ENCODE measurements at regions of chr3 and their contacts with region 1.

Region 1: GRCh38 chr3:12663936-12664908 is at the start of gene RAF1:
- DNase-seq: peak; percentile 98
- ATAC-seq: peak; percentile 93 to 98 (median 95)
- H3K4me3 ChIP-seq: peak within 1 kb of the TSS; percentile 73 to 95 (median 92)
- H3K27ac ChIP-seq: peak within 1 kb of the TSS; percentile 96 to 100 (median 99)
- H3K4me1 ChIP-seq: peaks cover 4 to 41% (median 34%) of the 10 kb centered on the region in 9 donors
- H3K27me3 ChIP-seq: no peaks in the 10 kb centered on the region
- CTCF ChIP-seq: no peak
- total RNA-seq, gene RAF1: 98.1 to 193 (median 129) TPM

Region 2: DNA sequence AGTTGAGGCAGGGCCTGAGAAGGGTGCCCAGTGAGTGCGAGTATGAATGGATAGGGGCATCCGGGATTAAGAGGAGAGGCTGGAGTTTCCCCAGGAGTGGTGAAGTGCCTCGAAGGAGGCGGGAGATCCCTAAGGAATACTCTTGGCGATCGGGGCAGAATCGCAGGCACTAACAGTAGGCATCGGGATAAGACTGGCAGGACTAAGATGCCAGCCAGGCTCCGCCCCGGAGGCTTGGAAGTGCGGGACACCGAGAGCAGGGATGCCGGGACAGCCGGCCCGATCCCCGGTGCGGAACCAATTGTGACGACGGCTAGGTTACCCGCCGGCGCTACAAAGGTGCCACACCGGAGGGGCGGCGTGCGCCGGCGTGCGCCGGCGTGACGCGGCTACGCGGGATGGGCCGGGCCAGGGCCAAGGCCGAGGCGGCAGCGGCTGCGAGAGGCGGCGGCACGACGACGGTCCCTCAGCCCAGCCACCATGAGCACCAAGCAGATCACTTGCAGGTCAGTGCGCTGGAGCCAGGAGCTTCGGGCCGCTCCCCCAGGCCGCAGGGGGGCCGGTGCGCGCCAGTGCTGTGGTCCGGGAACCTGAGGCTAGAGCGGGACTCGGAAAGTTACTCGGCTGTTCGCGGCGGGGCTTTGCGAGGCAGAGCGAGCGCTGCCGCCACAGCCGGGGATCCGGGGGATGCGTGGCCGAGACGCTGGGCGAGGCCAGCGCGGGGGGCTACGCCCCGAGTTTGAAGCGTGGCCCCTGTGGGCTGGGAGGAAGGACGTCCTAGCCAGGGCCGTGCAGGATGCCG is 107.3 kb before region 1 on chr3 and contains the start of gene MKRN2:
- intact Hi-C with region 1: loop called in 5 of 10 experiments (anchors 2 to 5 kb)
- DNase-seq: peak; percentile 84 to 88
- ATAC-seq: peak; percentile 92 to 98 (median 96)
- H3K4me3 ChIP-seq: peak within 1 kb of the TSS; percentile 61 to 99 (median 86)
- H3K27ac ChIP-seq: peak within 1 kb of the TSS; percentile 93 to 98 (median 98)
- H3K4me1 ChIP-seq: peaks cover 9 to 64% (median 51%) of the 10 kb centered on the region in 9 donors
- H3K27me3 ChIP-seq: peaks cover 0 to 38% (median 6%) of the 10 kb centered on the region in 7 donors
- CTCF ChIP-seq: peak in 1 of 9 donors; percentile 14
- total RNA-seq, gene MKRN2: 31.3 to 51.0 (median 40.5) TPM

Region 3: GRCh38 chr3:12601072-12601471 is 63.1 kb before region 1 on chr3:
- intact Hi-C with region 1: loop called in 2 of 10 experiments (anchors 5 to 10 kb)
- DNase-seq: no peak
- ATAC-seq: no peak
- H3K4me3 ChIP-seq: no peak overlapping the region
- H3K27ac ChIP-seq: peak overlapping the region in 1 of 10 donors; percentile 5
- H3K4me1 ChIP-seq: peaks cover 0 to 20% (median 0%) of the 10 kb centered on the region in 9 donors
- H3K27me3 ChIP-seq: no peaks in the 10 kb centered on the region
- CTCF ChIP-seq: peak in 4 of 9 donors; percentile 17 to 43 (median 41)

Region 4: GRCh38 chr3:12629560-12629959 is 34.7 kb before region 1 on chr3:
- intact Hi-C with region 1: loop called in 1 of 10 experiments (anchors 5 kb)
- DNase-seq: peak; percentile 44 to 58
- ATAC-seq: peak; percentile 56 to 88 (median 86)
- H3K4me3 ChIP-seq: no peak overlapping the region
- H3K27ac ChIP-seq: peak overlapping the region; percentile 49 to 77 (median 60)
- H3K4me1 ChIP-seq: peaks cover 9 to 91% (median 63%) of the 10 kb centered on the region in 9 donors
- H3K27me3 ChIP-seq: no peaks in the 10 kb centered on the region
- CTCF ChIP-seq: no peak

Region 5: DNA sequence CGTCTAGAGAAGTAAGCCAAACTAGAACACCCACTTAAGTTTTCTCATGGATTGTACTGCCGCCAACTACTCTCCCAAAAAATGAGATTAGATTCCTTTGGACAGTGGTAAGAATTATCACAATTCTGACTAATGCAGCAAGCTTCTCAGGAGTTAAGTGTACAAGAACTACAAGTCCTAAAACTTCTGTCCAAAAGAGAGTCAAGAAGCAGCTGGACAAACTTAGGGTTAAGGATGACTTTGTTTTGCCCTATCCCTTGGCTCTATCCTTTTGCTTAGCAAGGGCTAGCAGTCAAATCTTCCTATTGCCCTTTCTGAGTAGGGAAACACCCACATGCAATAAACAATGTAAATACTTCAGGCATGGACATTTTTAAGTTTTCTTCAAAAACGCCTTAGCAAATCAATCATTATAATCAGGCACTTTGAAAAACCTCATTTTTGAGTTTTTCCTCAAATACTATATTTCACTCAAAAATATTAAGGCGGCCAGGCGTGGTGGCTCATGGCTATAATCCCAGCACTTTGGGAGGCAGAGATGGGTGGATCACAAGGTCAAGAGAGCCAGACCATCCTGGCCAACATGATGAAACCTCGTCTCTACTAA is 19.8 kb before region 1 on chr3:
- intact Hi-C with region 1: no loop called
- DNase-seq: no peak
- ATAC-seq: peak in 6 of 8 donors; percentile 12 to 88 (median 44)
- H3K4me3 ChIP-seq: no peak overlapping the region
- H3K27ac ChIP-seq: peak overlapping the region in 5 of 10 donors; percentile 19 to 60 (median 44)
- H3K4me1 ChIP-seq: peaks cover 14 to 64% (median 53%) of the 10 kb centered on the region in 9 donors
- H3K27me3 ChIP-seq: no peaks in the 10 kb centered on the region
- CTCF ChIP-seq: no peak